A673 (cell line): ENCODE measurements at regions of chr4 and their contacts with region 1.

Region 1: DNA sequence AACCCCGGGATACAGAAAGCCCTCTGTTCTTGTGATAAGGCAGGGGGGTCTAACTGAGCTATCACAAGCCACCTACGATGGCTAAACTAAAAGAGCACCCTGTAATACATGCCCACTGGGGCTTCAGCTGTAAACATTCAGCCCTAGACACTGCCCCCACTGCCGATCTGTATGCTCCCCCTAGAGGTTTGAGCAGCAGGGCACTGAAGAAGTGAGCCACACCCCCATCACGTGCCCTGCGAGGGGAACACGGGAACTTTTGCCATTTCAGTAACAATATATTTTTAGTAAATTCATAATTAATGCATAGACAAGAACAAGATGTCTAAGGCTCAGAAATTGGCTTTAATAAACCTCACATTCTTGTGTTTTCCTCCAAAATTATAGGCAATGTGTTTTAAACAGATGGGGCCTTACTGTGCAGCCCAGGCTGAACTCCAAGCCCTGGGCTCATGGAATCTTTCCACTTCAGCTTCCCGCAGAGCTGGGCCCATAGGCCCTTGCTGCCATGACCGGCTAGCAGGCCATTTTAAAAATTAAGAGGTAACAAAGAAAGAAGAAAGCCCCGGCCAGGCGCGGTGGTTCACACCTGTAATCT is 235.3 kb upstream of the SFRP2 start:
- DNase-seq: peak; percentile 10
- H3K4me3 ChIP-seq: no peak overlapping the region
- H3K27ac ChIP-seq: no peak overlapping the region
- H3K4me1 ChIP-seq: no peaks in the 10 kb centered on the region
- H3K27me3 ChIP-seq: no peaks in the 10 kb centered on the region
- CTCF ChIP-seq: peak; percentile 34; the same call in 1 of the 2 replicates

Region 2: GRCh38 chr4:153773236-153773690 is 250.9 kb before region 1 on chr4:
- CTCF ChIA-PET with region 1: no interaction called
- POLR2A ChIA-PET with region 1: no interaction called
- intact Hi-C with region 1: loop called (anchors 5 kb)
- DNase-seq: peak; percentile 45
- H3K4me3 ChIP-seq: no peak overlapping the region
- H3K27ac ChIP-seq: no peak overlapping the region
- H3K4me1 ChIP-seq: no peaks in the 10 kb centered on the region
- H3K27me3 ChIP-seq: no peaks in the 10 kb centered on the region
- CTCF ChIP-seq: peak; percentile 47